Left cardiac atrium (tissue), 4 donors: ENCODE measurements at regions of chr20 and their contacts with region 1.

Region 1: GRCh38 chr20:10536531-10536930 is 101.4 kb downstream of the SLX4IP start:
- DNase-seq: no peak
- ATAC-seq: no peak

Region 2: DNA sequence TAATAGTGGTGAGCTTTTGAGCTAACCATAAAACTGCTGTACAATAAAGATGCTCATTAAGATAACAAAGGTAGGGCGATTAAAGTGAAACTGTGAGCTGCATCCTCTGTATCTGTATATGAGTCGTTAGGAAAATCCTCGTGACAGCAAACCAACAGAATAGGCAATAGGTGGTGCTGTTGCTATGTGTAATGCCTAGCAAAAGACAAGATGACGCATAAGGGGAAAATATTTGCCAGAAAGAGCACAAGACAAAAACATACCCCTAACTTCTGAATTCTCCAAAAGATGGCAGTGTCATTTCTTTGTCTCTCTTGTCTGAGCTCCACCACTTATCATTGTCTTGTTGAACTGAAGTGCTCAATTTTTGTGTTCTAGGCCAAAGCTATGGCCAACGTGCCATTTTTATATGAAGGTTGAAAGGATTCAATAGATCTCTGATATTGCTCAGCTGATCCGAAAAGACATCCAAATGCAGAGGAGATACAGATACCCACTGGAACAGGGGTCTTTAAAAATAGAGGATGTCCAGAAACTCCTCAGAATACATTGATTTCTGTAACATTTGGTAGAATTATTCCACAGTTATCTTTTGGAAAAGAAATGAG is 558.0 kb before region 1 on chr20:
- intact Hi-C with region 1: loop called in 1 of 2 experiments (anchors 10 kb)
- DNase-seq: no peak
- ATAC-seq: peak; percentile 91 to 97